Heart left ventricle (tissue), 16 donors: ENCODE measurements at regions of chr15 and their contacts with region 1.

Region 1: DNA sequence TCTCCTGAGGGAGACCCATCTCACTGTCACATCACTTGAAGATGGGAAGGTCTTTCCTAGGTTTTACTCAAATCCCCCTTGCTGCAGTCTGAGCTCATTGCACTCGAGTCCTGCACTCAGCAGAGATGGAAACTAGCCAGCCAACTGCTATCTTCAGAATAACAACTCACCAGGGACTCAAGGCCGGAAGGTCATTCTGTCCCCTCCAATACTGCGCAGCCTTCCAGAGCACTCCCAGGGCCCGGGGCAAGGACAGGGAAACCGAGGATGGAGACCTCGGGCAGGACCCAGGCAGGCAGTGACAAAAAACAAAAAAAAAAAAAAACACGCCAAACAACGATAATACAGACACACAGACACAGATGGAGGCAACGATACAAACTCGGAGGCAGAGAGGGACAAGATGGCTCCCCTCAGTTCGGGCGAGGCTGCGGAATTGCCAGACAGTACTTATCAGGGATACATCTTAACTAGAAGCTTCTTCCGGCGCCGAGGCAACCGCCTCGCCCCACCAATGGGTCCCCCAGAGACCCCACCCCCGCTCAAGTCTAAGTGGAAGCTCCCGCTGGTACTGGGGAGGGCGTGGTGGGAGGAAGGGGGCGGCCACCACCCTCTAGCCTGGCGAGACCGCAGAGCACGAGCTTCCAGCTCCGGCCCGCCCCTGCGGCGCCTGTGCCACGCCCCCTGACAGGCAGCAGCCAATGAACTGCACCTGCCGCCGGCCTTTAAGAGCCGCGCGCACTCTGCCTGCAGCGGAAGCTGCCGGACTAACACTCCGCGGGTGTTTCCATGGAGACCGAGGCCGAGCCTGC is 7.0 kb upstream of the MAP1A start:
- DNase-seq: peak; percentile 98 to 100 (median 99)
- ATAC-seq: peak; percentile 98
- H3K4me3 ChIP-seq: peak overlapping the region; percentile 44 to 74 (median 63)
- H3K27ac ChIP-seq: peak overlapping the region; percentile 86 to 96 (median 92)
- H3K4me1 ChIP-seq: peaks cover 0 to 52% (median 34%) of the 10 kb centered on the region in 12 donors
- H3K27me3 ChIP-seq: no peaks in the 10 kb centered on the region
- CTCF ChIP-seq: peak in 10 of 12 donors; percentile 35 to 63 (median 50)
- POLR2A ChIP-seq: peak; percentile 57 to 80

Region 2: DNA sequence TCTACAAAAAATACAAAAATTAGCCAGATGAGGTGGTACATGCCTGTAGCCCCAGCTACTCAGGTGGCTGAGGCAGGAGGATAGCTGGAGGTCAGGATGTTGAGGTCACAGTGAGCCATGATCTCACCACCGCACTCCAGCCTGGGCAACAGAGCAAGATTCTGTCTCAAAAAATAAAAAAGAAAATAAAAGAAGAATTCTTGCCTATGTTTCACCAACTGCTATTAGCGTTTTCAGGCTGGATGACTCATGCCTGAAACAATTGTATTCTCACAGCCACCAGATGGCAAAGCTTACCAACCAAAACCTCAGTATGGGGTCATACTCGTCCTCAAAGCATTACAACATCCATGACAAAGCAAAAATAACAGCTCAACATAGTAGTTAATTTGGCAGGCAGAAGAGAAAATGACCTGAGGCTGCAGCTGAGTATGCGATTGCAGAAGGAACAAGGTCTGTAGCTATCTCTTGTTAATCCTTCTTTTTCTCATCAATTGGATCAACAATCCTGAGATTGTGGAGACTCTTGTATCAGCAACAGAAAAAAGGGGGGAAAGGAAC is 69.6 kb before region 1 on chr15:
- intact Hi-C with region 1: loop called in 2 of 10 experiments (anchors 5 to 10 kb)
- DNase-seq: peak in 3 of 5 donors; percentile 25 to 31 (median 25)
- ATAC-seq: peak; percentile 89 to 97 (median 96)
- H3K4me3 ChIP-seq: no peak overlapping the region
- H3K27ac ChIP-seq: peak overlapping the region in 11 of 12 donors; percentile 4 to 75 (median 54)
- H3K4me1 ChIP-seq: peaks cover 0 to 16% (median 9%) of the 10 kb centered on the region in 12 donors
- H3K27me3 ChIP-seq: no peaks in the 10 kb centered on the region
- CTCF ChIP-seq: peak; percentile 9 to 57 (median 39)
- POLR2A ChIP-seq: no peak

Region 3: GRCh38 chr15:43483306-43484128 is 26.9 kb before region 1 on chr15:
- intact Hi-C with region 1: loop called in 1 of 10 experiments (anchors 5 kb)
- DNase-seq: no peak
- ATAC-seq: no peak
- H3K4me3 ChIP-seq: no peak overlapping the region
- H3K27ac ChIP-seq: peak overlapping the region in 2 of 12 donors; percentile 6 to 11
- H3K4me1 ChIP-seq: peaks cover 0 to 11% (median 0%) of the 10 kb centered on the region in 12 donors
- H3K27me3 ChIP-seq: no peaks in the 10 kb centered on the region
- CTCF ChIP-seq: peak in 9 of 12 donors; percentile 10 to 53 (median 33)
- POLR2A ChIP-seq: no peak

Region 4: GRCh38 chr15:43492673-43493601 is 17.5 kb before region 1 on chr15 and contains the start of gene TP53BP1:
- intact Hi-C with region 1: loop called in 7 of 10 experiments (anchors 1 to 2 kb)
- DNase-seq: peak; percentile 97 to 99 (median 97)
- ATAC-seq: peak; percentile 99 to 100 (median 100)
- H3K4me3 ChIP-seq: peak within 1 kb of the TSS; percentile 63 to 84 (median 78)
- H3K27ac ChIP-seq: peak within 1 kb of the TSS in 11 of 12 donors; percentile 48 to 88 (median 83)
- H3K4me1 ChIP-seq: peaks cover 0 to 29% (median 21%) of the 10 kb centered on the region in 12 donors
- H3K27me3 ChIP-seq: no peaks in the 10 kb centered on the region
- CTCF ChIP-seq: no peak
- POLR2A ChIP-seq: no peak
- total RNA-seq, gene TP53BP1: 22.7 to 34.4 (median 27.8) TPM

Region 5: DNA sequence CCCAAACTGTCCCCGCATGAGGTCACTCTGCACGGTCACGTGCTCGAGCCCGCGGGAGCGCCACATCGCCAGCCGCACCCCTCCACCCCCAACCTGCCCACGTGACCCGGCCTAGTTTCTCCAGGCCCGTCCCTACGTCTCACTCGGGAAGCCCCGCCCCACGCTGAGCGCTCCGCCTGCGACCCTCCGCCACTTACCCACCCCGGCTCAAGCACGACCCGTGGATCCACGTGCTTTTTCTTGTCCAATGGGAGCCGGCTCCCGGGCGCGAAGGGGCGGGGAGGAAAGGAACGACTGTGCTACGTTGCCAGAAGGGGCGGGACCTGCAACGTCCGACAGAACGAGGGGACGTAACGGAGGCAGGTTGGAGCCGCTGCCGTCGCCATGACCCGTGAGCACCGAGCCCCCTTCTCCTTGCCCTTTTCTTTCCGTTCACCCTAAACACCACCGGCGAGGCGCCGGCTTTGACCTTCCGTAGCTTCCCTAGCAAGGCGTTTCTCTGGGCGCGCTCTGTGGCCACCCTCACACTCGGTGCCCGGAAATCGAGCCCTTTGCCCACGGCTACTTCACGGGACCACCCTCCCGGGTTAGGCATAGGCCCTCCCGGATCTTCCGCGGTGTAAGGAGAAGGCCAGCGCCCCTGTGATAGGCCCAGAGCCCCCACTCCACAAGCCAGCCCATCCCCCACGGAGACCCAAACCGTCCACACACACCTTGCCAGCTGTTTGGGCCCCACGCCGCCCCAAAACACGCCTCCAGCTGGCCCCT is 281.8 kb after region 1 on chr15 and contains the start of gene SERF2:
- intact Hi-C with region 1: no loop called
- DNase-seq: peak; percentile 100
- ATAC-seq: peak; percentile 96 to 98 (median 97)
- H3K4me3 ChIP-seq: peak within 1 kb of the TSS; percentile 60 to 100 (median 85)
- H3K27ac ChIP-seq: peak within 1 kb of the TSS; percentile 86 to 100 (median 96)
- H3K4me1 ChIP-seq: peaks cover 4 to 50% (median 36%) of the 10 kb centered on the region in 12 donors
- H3K27me3 ChIP-seq: no peaks in the 10 kb centered on the region
- CTCF ChIP-seq: no peak
- POLR2A ChIP-seq: peak; percentile 98
- total RNA-seq, gene SERF2: 705 to 1,199 (median 843) TPM